ENCODE measurements at regions of chr6 and their contacts with region 1.

Region 1: GRCh38 chr6:35522660-35523658 is 10.3 kb upstream of the TULP1 start:
- DNase-seq: peak; percentile 65
- H3K4me3 ChIP-seq: peak overlapping the region in 1 of 2 donors; percentile 20
- H3K27ac ChIP-seq: peak overlapping the region; percentile 56 to 60
- H3K4me1 ChIP-seq: no peaks in the 10 kb centered on the region
- H3K27me3 ChIP-seq: no peaks in the 10 kb centered on the region
- CTCF ChIP-seq: peak; percentile 96 to 100 (median 98)
- POLR2A ChIP-seq: no peak

Region 2: DNA sequence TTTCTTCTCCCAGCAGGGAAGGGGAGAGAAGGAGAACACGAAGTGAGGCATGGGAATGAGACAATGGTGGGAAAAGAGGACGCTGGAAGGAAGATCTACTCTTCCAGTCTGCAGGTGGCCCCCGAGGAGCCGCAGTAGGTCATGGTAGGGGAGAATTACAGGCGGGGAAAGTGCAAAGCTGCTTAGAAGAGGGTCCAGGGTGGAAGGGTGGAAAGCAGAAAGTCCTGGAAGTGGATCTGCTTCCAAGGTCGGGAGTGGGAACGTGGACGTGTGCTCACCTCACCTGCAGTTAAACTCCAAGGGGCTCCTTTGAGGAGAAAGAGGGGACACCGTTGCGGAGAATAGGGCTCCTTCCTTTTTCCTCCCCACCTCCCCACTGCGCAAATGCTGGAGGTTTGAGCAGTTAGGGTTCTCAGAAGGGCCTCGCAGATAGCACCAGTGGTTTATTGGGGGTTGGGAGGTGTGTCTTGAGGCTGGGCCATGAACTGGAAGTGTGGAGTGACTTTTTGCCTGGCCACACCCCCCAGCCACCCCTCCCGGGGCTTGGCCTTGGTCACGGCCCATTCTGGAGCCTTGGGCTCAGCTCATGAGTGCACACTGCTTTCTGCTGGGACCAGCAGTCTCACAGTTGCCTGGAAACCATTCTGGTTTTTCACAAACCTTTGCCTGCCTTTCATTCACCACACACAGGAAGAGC is 1618.8 kb before region 1 on chr6:
- intact Hi-C with region 1: no loop called
- DNase-seq: no peak
- H3K4me3 ChIP-seq: no peak overlapping the region
- H3K27ac ChIP-seq: no peak overlapping the region
- H3K4me1 ChIP-seq: no peaks in the 10 kb centered on the region
- H3K27me3 ChIP-seq: no peaks in the 10 kb centered on the region
- CTCF ChIP-seq: no peak
- POLR2A ChIP-seq: no peak

Region 3: DNA sequence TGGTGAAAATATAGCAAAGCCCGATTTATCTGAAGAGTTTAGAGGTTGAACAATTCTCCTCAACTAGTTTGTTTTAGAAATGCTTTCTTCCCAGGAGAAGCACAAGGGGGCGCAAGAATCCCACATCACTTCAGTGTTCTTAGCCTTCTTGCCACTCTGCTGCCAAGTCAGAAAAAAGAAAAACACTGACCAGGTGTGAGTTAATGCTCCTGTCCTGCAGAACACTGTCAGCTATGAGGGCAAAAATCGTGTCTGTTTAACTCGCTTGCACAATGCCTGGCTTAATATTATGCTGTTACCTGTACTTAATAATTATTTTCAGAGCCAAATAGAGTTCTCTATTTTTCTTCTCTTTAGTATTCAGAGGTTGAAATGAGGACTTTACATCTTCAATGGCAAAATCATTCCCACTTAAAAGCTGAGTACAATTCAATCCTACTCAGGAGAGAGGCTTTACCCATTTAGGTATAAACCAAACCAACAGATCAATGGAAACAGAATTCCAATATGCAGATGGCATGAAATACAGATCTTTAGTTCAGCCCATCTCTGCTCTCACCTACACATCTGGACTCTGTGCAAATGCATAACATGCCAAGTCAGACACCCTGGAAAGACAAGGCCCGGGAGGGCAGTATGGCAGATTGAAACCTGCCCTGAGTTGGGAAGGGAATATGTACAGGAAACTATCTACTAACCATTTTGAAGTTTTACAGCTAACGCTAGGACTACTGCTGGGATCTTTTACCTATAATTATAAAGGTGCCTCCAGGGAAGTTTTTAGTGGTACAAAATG is 61.1 kb after region 1 on chr6:
- intact Hi-C with region 1: loop called (anchors 5 kb)
- DNase-seq: peak; percentile 81
- H3K4me3 ChIP-seq: no peak overlapping the region
- H3K27ac ChIP-seq: peak overlapping the region; percentile 70 to 84
- H3K4me1 ChIP-seq: peaks cover 12% of the 10 kb centered on the region
- H3K27me3 ChIP-seq: no peaks in the 10 kb centered on the region
- CTCF ChIP-seq: peak; percentile 59 to 97 (median 87)
- POLR2A ChIP-seq: no peak

Region 4: GRCh38 chr6:35640017-35640664 is 117.2 kb after region 1 on chr6:
- intact Hi-C with region 1: loop called (anchors 10 kb)
- DNase-seq: peak; percentile 22
- H3K4me3 ChIP-seq: no peak overlapping the region
- H3K27ac ChIP-seq: peak overlapping the region in 1 of 2 donors; percentile 63
- H3K4me1 ChIP-seq: no peaks in the 10 kb centered on the region
- H3K27me3 ChIP-seq: no peaks in the 10 kb centered on the region
- CTCF ChIP-seq: no peak
- POLR2A ChIP-seq: no peak

Region 5: DNA sequence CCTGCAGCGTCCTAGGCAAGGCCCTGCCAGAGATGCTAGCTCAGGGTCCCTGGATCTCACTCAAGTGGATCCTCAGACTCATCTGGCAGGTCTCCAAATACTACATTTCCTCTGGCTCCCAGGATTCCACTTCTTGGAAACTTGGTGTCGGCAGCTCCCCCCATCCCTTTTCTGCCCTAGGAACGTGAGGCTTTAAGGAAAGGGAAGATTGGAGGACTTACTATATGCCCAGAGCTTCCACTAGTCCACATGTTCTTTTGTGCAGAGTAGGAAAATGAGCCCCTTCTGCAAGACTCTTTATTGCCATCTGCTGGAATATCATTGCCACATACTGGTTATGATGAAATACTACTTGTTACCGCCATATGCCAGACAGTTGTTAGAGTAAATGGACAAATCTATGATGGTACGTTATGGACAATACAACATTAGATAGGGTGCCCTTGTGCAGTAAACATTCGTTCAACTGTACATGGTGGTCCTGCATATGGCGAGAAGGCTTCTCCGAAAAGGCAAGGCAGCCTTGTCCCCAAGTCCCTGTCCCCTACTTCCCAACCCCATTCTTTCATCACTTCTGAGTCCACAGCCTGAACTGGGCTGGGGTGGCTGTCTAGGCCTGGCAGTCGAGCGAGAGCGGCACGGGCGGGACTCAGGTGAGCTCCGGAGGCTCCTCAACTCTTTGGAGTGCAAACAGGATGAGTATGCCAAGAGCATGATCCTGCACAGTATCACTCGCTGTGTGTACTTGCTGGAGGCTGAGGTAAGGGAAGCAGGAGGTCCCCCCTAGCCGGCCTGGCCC is 214.7 kb after region 1 on chr6:
- intact Hi-C with region 1: loop called (anchors 1 kb)
- DNase-seq: peak; percentile 54
- H3K4me3 ChIP-seq: no peak overlapping the region
- H3K27ac ChIP-seq: no peak overlapping the region
- H3K4me1 ChIP-seq: peaks cover 19% of the 10 kb centered on the region
- H3K27me3 ChIP-seq: no peaks in the 10 kb centered on the region
- CTCF ChIP-seq: peak; percentile 77 to 99 (median 92)
- POLR2A ChIP-seq: no peak

Region 6: DNA sequence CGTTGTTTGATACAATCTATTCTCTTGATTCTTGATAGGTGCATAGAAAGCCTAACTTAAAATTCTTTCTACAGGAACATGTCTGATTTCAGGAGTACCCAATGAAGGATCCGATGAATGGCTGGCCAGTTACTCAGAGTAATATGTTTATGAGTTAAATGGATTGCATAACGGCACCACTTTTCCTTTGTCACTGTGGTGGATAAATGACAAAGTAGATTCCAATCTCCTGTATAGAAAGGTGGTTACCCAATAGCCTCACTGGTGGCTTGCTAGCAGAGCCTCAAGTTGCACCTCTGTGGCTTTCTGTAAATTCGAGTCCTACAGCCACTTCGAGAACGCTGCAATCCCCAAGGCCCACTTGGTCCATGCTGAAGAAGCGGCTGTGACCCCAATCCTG is 310.6 kb after region 1 on chr6:
- intact Hi-C with region 1: no loop called
- DNase-seq: no peak
- H3K4me3 ChIP-seq: no peak overlapping the region
- H3K27ac ChIP-seq: no peak overlapping the region
- H3K4me1 ChIP-seq: no peaks in the 10 kb centered on the region
- H3K27me3 ChIP-seq: no peaks in the 10 kb centered on the region
- CTCF ChIP-seq: no peak
- POLR2A ChIP-seq: no peak